ENCODE measurements at regions of chr13 and their contacts with region 1.

Region 1: DNA sequence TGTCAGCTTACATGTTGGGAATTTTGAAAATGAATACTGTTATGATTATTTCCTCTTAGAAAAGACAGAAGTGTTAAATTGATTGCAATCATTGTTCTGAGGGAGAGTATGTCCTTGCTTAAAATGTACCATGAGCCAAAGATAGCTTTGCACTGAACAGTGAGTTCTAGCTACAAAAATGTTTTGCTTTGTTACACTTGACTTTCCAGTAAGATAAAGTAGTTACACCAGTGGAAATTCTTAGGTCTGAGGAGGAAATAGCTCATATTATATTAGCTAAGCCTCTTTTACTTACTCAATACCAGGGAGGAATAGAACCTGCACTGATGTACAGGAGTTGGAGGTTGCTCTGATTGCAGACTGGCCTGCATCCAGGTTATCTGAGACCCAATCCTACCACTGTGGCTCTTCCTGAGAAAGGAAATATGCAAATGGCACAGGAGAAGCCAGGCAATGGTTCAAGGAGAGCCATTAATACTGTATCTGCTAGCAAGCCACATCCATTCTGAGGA is 53.0 kb upstream of the FBXL3 start:
- DNase-seq: no peak
- ATAC-seq: peak in 2 of 8 donors; percentile 31 to 69
- H3K4me3 ChIP-seq: no peak overlapping the region
- H3K27ac ChIP-seq: no peak overlapping the region
- H3K4me1 ChIP-seq: no peaks in the 10 kb centered on the region
- H3K27me3 ChIP-seq: no peaks in the 10 kb centered on the region
- CTCF ChIP-seq: no peak

Region 2: DNA sequence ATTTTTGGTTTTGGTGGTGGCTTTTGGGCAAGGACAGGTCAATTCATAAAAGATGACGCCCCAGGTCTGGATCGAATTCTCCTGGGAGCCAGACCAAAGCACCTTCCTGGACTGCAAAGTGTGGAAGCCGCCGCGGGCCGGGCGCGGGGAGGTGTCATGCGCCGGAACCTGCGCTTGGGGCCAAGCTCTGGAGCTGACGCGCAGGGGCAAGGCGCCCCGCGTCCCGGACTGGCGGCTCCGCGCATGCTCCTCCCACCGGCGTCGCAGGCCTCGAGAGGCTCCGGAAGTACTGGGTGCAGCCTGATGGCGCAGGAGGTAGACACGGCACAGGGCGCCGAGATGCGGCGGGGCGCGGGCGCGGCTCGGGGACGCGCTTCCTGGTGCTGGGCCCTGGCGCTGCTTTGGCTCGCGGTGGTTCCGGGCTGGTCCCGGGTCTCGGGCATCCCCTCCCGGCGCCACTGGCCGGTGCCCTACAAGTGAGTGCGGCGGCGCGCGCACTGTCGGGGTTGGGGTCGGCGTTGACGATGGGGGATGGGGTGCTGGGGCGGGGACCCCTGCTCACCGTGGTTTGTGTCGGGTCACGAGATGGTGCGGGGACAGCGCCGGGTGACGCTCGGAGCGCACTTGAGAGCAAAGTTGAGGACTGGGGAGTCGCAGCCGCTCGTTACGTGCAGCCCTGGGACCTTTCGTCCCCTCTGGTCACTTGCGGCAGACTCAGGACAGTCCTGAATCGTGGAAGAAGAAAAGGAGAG is 88.0 kb before region 1 on chr13 and contains the start of gene CLN5:
- intact Hi-C with region 1: no loop called
- DNase-seq: peak; percentile 92 to 95
- ATAC-seq: peak; percentile 98 to 99 (median 98)
- H3K4me3 ChIP-seq: peak within 1 kb of the TSS; percentile 70 to 90 (median 80)
- H3K27ac ChIP-seq: peak within 1 kb of the TSS; percentile 79 to 96 (median 91)
- H3K4me1 ChIP-seq: peaks cover 0 to 26% (median 21%) of the 10 kb centered on the region in 9 donors
- H3K27me3 ChIP-seq: no peaks in the 10 kb centered on the region
- CTCF ChIP-seq: peak in 2 of 9 donors; percentile 3 to 13
- total RNA-seq, gene CLN5: 10.5 to 22.3 (median 16.0) TPM

Region 3: DNA sequence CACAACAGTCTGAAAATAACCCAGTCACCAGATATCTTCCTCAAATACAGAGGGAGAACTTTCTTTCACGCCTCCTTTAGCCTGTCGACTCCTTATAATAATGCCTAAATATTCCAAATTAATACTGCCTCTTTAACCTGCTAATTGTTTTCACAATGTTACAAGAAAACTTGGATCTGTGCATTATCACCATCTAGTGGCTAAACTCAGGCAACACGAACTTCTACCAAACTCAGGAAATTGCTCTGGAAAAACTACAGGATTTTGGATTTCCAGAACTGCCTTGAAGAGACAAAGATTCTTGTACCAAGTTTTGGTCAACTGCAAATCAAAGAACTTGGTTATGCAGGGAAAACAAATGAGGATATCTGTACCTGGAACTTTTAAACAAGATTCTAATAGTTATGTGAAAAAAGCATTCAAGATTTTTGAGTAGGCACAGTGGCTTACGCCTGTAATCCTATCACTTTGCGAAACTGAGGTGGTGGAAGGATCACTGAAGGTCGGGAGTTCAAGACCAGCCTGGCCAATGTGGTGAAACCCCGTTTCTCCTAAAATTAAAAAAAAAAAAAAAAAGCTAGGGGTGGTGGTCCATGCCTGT is 77.3 kb before region 1 on chr13:
- intact Hi-C with region 1: no loop called
- DNase-seq: no peak
- ATAC-seq: peak in 5 of 8 donors; percentile 24 to 45 (median 41)
- H3K4me3 ChIP-seq: no peak overlapping the region
- H3K27ac ChIP-seq: no peak overlapping the region
- H3K4me1 ChIP-seq: peaks cover 0 to 44% (median 27%) of the 10 kb centered on the region in 9 donors
- H3K27me3 ChIP-seq: no peaks in the 10 kb centered on the region
- CTCF ChIP-seq: peak; percentile 22 to 76 (median 58)

Region 4: DNA sequence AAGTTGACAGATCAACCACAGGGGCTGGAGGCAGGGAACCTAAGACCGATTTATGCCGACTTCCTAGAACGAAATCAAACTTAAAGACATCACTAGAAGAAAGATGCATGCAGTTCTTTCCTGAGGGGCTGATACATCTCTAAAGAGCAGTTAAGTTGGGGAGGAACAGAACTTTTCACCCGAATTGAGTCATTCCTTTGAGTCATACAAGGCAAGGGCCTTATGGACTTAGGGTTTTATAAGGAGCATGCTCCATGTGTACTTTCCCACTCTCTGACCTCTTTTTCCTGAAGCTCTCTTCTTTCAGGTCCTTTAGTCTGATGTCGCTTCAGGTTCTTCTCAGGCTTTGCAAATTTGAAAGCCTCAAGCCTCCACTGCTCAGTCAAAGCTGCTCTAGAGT is 45.1 kb before region 1 on chr13:
- intact Hi-C with region 1: no loop called
- DNase-seq: no peak
- ATAC-seq: no peak
- H3K4me3 ChIP-seq: no peak overlapping the region
- H3K27ac ChIP-seq: no peak overlapping the region
- H3K4me1 ChIP-seq: peaks cover 0 to 11% (median 5%) of the 10 kb centered on the region in 9 donors
- H3K27me3 ChIP-seq: no peaks in the 10 kb centered on the region
- CTCF ChIP-seq: no peak

Region 5: DNA sequence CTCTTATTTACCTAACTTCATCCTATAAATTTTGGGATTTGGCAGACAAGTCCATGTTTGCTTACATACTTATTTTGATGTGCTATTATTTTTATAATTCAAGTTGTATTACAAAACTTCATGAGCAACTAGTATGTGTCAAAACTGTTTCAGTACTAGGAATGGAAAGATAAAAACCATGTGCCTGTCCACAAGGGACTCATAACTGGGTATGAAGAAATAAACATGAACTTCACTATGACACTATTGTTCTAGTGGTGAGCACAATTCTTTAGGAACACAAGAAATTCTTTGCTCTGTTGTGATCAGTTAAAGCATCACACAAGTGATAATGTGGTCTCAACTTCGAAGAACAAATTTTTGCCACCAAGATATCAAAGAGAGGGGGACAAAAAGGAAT is 44.5 kb after region 1 on chr13:
- intact Hi-C with region 1: no loop called
- DNase-seq: no peak
- ATAC-seq: no peak
- H3K4me3 ChIP-seq: no peak overlapping the region
- H3K27ac ChIP-seq: no peak overlapping the region
- H3K4me1 ChIP-seq: peaks cover 0 to 12% (median 0%) of the 10 kb centered on the region in 9 donors
- H3K27me3 ChIP-seq: no peaks in the 10 kb centered on the region
- CTCF ChIP-seq: no peak

Region 6: GRCh38 chr13:77176350-77176749 is 96.4 kb after region 1 on chr13:
- intact Hi-C with region 1: loop called in 1 of 10 experiments (anchors 10 kb)
- DNase-seq: no peak
- ATAC-seq: no peak
- H3K4me3 ChIP-seq: no peak overlapping the region
- H3K27ac ChIP-seq: no peak overlapping the region
- H3K4me1 ChIP-seq: no peaks in the 10 kb centered on the region
- H3K27me3 ChIP-seq: no peaks in the 10 kb centered on the region
- CTCF ChIP-seq: no peak

Measured in heart right ventricle (tissue), 16 donors.